ENCODE measurements at regions of chr3 and their contacts with region 1.

Region 1: GRCh38 chr3:10224784-10225665 is 23.2 kb upstream of the TATDN2 start:
- DNase-seq: peak; percentile 34 to 81 (median 65)
- ATAC-seq: peak; percentile 70
- H3K4me3 ChIP-seq: no peak overlapping the region
- H3K4me3 Mint-ChIP-seq: peak overlapping the region; percentile 7
- H3K27ac ChIP-seq: peak overlapping the region in 1 of 2 experiments; percentile 30
- H3K27ac Mint-ChIP-seq: peak overlapping the region; percentile 75
- H3K4me1 ChIP-seq: peaks cover 24% of the 10 kb centered on the region
- H3K4me1 Mint-ChIP-seq: peaks cover 51% of the 10 kb centered on the region
- H3K27me3 ChIP-seq: no peaks in the 10 kb centered on the region
- H3K27me3 Mint-ChIP-seq: no peaks in the 10 kb centered on the region
- CTCF ChIP-seq: peak; percentile 86

Region 2: DNA sequence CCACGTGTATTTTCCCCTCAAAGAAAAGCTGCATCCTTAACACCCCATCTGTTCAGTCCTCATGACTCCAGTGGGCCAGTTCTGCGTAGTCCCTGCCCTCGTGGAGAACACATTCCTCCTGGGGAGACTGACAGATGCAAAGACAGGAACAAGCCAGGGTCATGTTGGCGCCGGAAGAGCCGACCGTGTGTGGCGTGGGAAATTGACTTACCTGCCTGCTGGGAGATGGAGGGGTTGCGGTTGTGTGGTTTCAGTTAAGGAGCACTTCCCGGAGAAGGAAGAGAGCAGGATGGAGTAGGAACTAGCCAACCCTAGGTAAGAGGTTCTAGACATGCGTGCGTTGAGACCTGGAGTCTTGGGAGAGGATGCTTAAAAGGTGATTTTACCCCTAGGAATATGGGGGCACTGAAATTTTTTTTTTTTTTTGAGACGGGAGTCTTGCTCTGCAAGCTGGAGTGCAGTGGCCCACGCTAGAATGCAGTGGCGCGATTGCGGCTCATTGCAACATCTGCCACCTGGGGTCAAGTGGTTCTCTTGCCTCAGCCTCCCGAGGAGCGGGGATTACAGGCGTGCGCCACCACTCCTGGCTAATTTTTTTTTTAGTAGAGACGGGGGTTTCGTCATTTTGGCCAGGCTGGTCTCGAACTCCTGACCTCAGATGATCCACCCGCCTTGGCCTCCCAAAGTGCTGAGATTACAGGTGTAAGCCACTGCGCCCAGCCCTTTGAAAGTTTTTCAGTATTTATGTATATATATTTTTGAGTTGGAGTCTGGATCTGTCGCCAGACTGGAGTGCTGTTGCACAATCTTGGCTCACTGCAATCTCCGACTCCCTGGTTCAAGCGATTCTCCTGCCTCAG is 82.1 kb before region 1 on chr3:
- CTCF ChIA-PET with region 1: interaction called, 3 read pairs
- POLR2A ChIA-PET with region 1: interaction called, 7 read pairs
- intact Hi-C with region 1: loop called (anchors 2 to 5 kb)
- DNase-seq: peak in 3 of 9 experiments; percentile 22 to 51 (median 33)
- ATAC-seq: no peak
- H3K4me3 ChIP-seq: peak overlapping the region; percentile 73 to 74
- H3K4me3 Mint-ChIP-seq: peak overlapping the region; percentile 93
- H3K27ac ChIP-seq: peak overlapping the region in 1 of 2 experiments; percentile 54
- H3K27ac Mint-ChIP-seq: peak overlapping the region; percentile 98
- H3K4me1 ChIP-seq: peaks cover 32% of the 10 kb centered on the region
- H3K4me1 Mint-ChIP-seq: peaks cover 32% of the 10 kb centered on the region
- H3K27me3 ChIP-seq: no peaks in the 10 kb centered on the region
- H3K27me3 Mint-ChIP-seq: no peaks in the 10 kb centered on the region
- CTCF ChIP-seq: no peak

Region 3: GRCh38 chr3:10242182-10243065 is 17.4 kb after region 1 on chr3:
- CTCF ChIA-PET with region 1: interaction called, 3 read pairs
- POLR2A ChIA-PET with region 1: interaction called, 3 read pairs
- intact Hi-C with region 1: loop called (anchors 2 kb)
- DNase-seq: peak; percentile 24 to 91 (median 75)
- ATAC-seq: peak; percentile 91
- H3K4me3 ChIP-seq: peak overlapping the region in 1 of 2 experiments; percentile 11
- H3K4me3 Mint-ChIP-seq: peak overlapping the region; percentile 73
- H3K27ac ChIP-seq: peak overlapping the region; percentile 33 to 70
- H3K27ac Mint-ChIP-seq: peak overlapping the region; percentile 90
- H3K4me1 ChIP-seq: peaks cover 39% of the 10 kb centered on the region
- H3K4me1 Mint-ChIP-seq: peaks cover 52% of the 10 kb centered on the region
- H3K27me3 ChIP-seq: no peaks in the 10 kb centered on the region
- H3K27me3 Mint-ChIP-seq: no peaks in the 10 kb centered on the region
- CTCF ChIP-seq: no peak